ENCODE measurements at regions of chr13 and their contacts with region 1.

Region 1: GRCh38 chr13:48769107-48769704 is 115.5 kb downstream of the CYSLTR2 start:
- DNase-seq: peak; percentile 86 to 94 (median 89)
- H3K4me3 ChIP-seq: no peak overlapping the region
- H3K27ac ChIP-seq: no peak overlapping the region
- H3K4me1 ChIP-seq: peaks cover 0 to 9% (median 0%) of the 10 kb centered on the region in 4 experiments
- H3K27me3 ChIP-seq: no peaks in the 10 kb centered on the region

Region 2: GRCh38 chr13:48334534-48335127 is 434.6 kb before region 1 on chr13:
- CTCF ChIA-PET with region 1: interaction called, 17 read pairs
- POLR2A ChIA-PET with region 1: no interaction called
- DNase-seq: peak; percentile 51 to 77 (median 75)
- H3K4me3 ChIP-seq: no peak overlapping the region
- H3K27ac ChIP-seq: no peak overlapping the region
- H3K4me1 ChIP-seq: peaks cover 0 to 6% (median 0%) of the 10 kb centered on the region in 4 experiments
- H3K27me3 ChIP-seq: no peaks in the 10 kb centered on the region

Region 3: DNA sequence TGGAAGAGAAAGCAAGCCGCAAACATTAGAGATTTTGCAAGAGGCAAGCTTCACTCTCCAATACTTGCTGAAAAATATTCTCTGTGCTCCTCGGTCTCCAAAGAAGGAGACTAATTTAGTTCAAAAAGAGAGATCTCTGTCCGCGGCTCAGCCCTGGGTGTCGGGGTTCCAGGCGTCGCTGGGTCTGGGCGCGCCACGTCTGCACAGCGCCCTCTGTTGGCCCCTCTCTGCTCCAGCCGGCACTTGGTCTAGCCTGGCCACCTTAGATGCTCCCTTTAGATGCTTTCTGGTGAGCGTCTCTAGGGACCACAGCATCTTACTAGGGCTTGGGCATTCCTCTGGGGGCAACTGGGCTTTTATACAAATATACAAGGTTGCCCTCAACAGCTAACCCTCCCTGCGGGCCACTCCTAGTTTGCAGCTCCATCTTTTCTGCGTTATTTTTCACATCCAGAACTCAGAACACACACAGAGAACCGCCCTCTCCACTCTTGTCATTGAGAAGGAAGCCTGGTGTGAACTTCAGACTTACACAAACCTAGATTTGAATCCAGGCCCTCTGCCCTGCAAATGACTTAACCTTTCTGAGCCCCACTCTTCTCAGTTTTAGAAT is 37.1 kb before region 1 on chr13:
- CTCF ChIA-PET with region 1: interaction called, 11 read pairs
- POLR2A ChIA-PET with region 1: no interaction called
- DNase-seq: peak; percentile 43 to 65 (median 64)
- H3K4me3 ChIP-seq: peak overlapping the region in 3 of 7 experiments; percentile 32 to 53 (median 52)
- H3K27ac ChIP-seq: no peak overlapping the region
- H3K4me1 ChIP-seq: peaks cover 0 to 6% (median under 1%) of the 10 kb centered on the region in 4 experiments
- H3K27me3 ChIP-seq: no peaks in the 10 kb centered on the region